WTC11 (cell line): ENCODE measurements at regions of chr7 and their contacts with region 1.

Region 1: DNA sequence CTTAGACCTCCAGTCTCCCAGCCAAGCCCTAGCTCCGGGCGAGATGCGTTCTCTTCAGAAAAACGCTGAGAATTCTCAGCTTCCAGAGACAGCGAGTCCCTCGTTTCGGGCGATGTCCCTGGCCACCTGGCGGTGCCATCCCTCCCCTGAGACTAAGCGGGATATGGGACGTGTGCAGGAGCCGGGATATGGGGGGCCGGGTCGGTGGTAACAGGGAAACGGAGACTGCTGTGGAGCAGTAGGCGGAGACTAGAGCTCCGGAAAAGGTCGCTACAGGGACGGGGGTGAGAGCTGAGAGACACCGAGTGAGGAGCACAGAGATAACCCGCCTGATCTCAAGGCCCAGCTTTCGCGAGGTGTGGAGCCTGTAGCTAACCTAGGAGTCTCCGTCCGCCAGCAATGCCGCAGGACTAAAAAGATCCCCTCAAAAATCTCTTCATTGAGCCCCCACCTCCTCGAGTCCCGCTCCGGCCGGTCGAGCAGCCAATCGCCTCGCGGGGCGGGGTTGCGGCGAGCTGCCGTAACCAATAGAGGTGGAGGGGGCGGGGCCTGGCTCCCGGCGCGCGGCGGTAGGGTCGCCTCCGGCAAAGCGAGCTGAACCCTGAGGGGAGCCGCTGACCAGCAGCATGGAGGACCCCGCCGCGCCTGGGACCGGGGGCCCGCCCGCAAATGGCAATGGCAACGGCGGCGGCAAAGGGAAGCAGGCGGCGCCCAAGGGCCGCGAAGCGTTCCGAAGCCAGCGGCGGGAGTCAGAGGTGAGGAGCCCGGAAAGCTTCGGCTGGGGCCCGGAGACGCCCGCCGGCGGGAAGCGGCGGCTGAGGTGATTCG is at the start of gene STRIP2:
- DNase-seq: peak; percentile 99
- ATAC-seq: peak; percentile 88
- H3K4me3 Mint-ChIP-seq: peak within 1 kb of the TSS; percentile 86
- H3K27ac Mint-ChIP-seq: peak within 1 kb of the TSS; percentile 94
- H3K4me1 Mint-ChIP-seq: peaks cover 23% of the 10 kb centered on the region
- H3K27me3 Mint-ChIP-seq: peaks cover 31% of the 10 kb centered on the region
- CTCF ChIP-seq: no peak
- total RNA-seq, gene STRIP2: 6.5 to 7.7 TPM (median 7.6 TPM) in 3 replicates

Region 2: GRCh38 chr7:129343099-129343700 is 90.9 kb before region 1 on chr7:
- CTCF ChIA-PET with region 1: interaction called, 13 read pairs
- POLR2A ChIA-PET with region 1: no interaction called
- DNase-seq: no peak
- ATAC-seq: no peak
- H3K4me3 Mint-ChIP-seq: no peak overlapping the region
- H3K27ac Mint-ChIP-seq: no peak overlapping the region
- H3K4me1 Mint-ChIP-seq: peaks cover 18% of the 10 kb centered on the region
- H3K27me3 Mint-ChIP-seq: no peaks in the 10 kb centered on the region
- CTCF ChIP-seq: peak; percentile 25; the same call in 1 of the 2 replicates

Region 3: GRCh38 chr7:129367700-129368388 is 66.2 kb before region 1 on chr7:
- CTCF ChIA-PET with region 1: interaction called, 34 read pairs
- POLR2A ChIA-PET with region 1: interaction called, 5 read pairs
- DNase-seq: peak; percentile 86
- ATAC-seq: peak; percentile 96
- H3K4me3 Mint-ChIP-seq: no peak overlapping the region
- H3K27ac Mint-ChIP-seq: peak overlapping the region; percentile 89
- H3K4me1 Mint-ChIP-seq: peaks cover 37% of the 10 kb centered on the region
- H3K27me3 Mint-ChIP-seq: no peaks in the 10 kb centered on the region
- CTCF ChIP-seq: peak; percentile 81

Region 4: DNA sequence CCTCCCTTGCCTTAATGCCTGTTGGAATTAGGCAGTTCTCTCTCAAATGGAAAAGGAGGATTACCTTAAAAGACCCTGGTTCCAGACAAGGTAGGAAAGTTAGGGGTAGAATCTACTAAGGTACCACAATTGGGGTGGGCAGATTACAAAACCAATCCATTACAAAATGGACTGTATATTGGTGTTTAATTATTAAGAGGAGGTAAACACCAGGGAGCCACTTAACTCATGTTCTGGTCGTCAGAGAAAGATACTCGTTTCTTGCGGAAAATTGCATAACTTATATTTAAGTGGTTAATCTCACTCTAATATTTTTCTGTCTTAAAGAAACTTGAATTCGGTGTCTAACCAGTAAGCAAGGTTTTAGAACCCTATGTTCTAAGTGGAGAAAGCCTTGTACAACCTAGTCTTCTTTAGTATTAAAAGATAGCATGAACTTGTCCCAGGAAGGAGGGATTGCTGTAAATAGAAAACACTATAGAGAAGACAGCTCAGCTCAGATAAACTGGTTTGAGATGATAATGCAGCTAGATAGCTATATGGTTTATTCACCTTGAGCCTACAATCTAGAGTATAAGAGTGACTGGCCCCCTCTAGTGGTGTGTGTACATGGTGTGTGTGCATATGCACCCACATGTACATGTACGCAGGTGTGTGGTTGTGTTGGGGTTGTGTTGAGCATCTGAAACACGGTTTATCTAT is 57.8 kb before region 1 on chr7:
- CTCF ChIA-PET with region 1: interaction called, 36 read pairs
- POLR2A ChIA-PET with region 1: interaction called, 4 read pairs
- DNase-seq: peak; percentile 29
- ATAC-seq: peak; percentile 56
- H3K4me3 Mint-ChIP-seq: no peak overlapping the region
- H3K27ac Mint-ChIP-seq: peak overlapping the region; percentile 28
- H3K4me1 Mint-ChIP-seq: peaks cover 38% of the 10 kb centered on the region
- H3K27me3 Mint-ChIP-seq: no peaks in the 10 kb centered on the region
- CTCF ChIP-seq: peak; percentile 32; the same call in 1 of the 2 replicates

Region 5: GRCh38 chr7:129389829-129390228 is 44.2 kb before region 1 on chr7:
- CTCF ChIA-PET with region 1: interaction called, 11 read pairs
- POLR2A ChIA-PET with region 1: interaction called, 5 read pairs
- DNase-seq: no peak
- ATAC-seq: no peak
- H3K4me3 Mint-ChIP-seq: no peak overlapping the region
- H3K27ac Mint-ChIP-seq: no peak overlapping the region
- H3K4me1 Mint-ChIP-seq: peaks cover 33% of the 10 kb centered on the region
- H3K27me3 Mint-ChIP-seq: no peaks in the 10 kb centered on the region
- CTCF ChIP-seq: no peak

Region 6: DNA sequence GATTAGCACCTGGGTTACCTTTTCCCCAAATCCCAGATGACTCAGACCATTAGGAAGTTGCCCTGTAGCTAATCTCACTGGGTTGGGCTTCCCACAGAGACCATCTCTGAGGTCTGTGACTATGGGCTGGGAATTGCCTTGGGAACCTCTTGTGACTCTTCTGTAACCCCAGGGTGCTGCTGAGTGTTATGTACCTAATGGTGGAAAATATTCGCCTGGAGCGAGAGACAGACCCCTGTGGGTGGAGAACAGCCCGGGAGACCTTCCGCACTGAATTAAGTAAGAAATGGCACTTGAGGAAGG is 20.1 kb after region 1 on chr7:
- CTCF ChIA-PET with region 1: interaction called, 11 read pairs
- POLR2A ChIA-PET with region 1: no interaction called
- DNase-seq: no peak
- ATAC-seq: no peak
- H3K4me3 Mint-ChIP-seq: no peak overlapping the region
- H3K27ac Mint-ChIP-seq: no peak overlapping the region
- H3K4me1 Mint-ChIP-seq: no peaks in the 10 kb centered on the region
- H3K27me3 Mint-ChIP-seq: no peaks in the 10 kb centered on the region
- CTCF ChIP-seq: no peak

Region 7: GRCh38 chr7:129468087-129468486 is 34.0 kb after region 1 on chr7:
- CTCF ChIA-PET with region 1: interaction called, 19 read pairs
- POLR2A ChIA-PET with region 1: interaction called, 3 read pairs
- DNase-seq: no peak
- ATAC-seq: no peak
- H3K4me3 Mint-ChIP-seq: no peak overlapping the region
- H3K27ac Mint-ChIP-seq: no peak overlapping the region
- H3K4me1 Mint-ChIP-seq: peaks cover 21% of the 10 kb centered on the region
- H3K27me3 Mint-ChIP-seq: no peaks in the 10 kb centered on the region
- CTCF ChIP-seq: no peak